MCF 10A (cell line): ENCODE measurements at regions of chr16 and their contacts with region 1.

Region 1: DNA sequence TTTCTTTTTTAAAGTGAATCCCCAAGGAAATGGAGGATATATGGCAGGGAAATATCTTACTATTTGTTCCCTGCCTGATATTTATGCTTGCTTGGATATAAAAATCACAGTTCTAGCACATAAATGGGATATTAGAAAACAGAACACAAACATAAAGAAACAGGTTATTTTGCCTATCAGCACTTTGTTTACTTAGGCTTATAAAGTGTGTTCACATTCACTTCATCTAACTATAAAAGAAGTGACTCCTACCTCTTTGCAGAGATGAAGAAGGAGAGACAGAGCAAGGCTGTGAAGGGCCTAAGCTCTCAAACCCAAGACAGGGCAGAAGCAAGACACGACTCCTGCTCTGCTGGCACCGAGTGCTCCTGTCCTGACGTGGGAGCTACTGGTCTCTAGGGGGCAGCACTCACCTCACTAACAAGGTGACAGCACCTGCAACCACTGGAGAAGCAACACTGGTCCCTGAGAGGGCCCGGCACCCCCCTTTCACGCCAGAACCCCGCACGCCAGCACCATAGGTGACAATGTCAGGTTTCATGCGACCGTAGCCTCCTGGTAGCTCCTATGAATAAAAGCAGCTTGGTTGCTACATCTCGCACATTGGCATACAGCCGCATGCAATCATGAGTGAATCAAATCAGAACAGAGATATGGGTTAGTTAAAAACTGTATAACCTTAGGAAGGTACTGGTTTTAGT is 32.0 kb downstream of the MBTPS1 start:
- DNase-seq: peak; percentile 77
- H3K4me3 Mint-ChIP-seq: no peak overlapping the region
- H3K27ac Mint-ChIP-seq: no peak overlapping the region
- H3K4me1 Mint-ChIP-seq: no peaks in the 10 kb centered on the region
- H3K27me3 Mint-ChIP-seq: no peaks in the 10 kb centered on the region
- CTCF ChIP-seq: peak; percentile 75

Region 2: DNA sequence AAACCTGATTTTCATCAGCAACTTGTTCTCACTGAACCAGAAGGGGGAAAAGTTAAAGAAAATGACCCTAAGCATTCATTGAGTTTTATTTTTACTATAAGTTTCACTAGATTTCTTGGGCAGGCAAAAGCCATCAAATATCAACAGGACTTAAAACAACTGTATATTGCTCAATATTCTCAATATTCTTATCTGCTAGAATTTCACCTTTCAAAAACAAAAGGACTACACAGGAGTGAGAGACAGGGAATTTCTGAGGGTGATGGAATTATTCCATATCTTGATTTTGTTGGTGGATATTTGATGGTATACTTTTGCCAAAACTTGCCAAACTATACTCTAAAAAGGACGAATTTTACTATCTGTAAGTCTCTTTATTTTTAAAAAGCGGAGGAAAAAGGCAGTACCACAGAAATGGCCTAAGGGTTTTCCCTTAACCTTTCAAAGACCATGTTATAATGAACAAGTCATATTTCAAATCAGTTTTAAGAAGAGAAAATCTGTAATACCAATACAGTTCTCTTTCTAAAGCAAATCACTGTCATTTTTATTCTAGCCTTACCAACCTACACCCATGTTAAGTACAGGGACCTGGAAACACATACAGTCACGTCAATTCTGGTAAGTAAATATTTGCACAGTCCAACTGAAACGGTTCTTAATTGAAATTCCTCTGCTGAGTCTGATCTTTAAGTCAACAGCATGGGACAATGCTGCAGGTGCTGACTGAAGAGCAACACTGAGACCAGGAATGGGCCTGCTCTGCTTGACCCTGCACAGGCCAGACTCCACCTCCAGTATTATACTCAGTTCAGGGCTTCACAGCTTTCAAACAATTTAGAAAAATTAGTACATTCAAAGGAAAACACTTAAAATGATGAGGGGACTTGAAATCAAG is 11.6 kb after region 1 on chr16:
- CTCF ChIA-PET with region 1: interaction called, 12 read pairs
- POLR2A ChIA-PET with region 1: no interaction called
- intact Hi-C with region 1: no loop called
- DNase-seq: no peak
- H3K4me3 Mint-ChIP-seq: no peak overlapping the region
- H3K27ac Mint-ChIP-seq: no peak overlapping the region
- H3K4me1 Mint-ChIP-seq: no peaks in the 10 kb centered on the region
- H3K27me3 Mint-ChIP-seq: no peaks in the 10 kb centered on the region
- CTCF ChIP-seq: no peak

Region 3: DNA sequence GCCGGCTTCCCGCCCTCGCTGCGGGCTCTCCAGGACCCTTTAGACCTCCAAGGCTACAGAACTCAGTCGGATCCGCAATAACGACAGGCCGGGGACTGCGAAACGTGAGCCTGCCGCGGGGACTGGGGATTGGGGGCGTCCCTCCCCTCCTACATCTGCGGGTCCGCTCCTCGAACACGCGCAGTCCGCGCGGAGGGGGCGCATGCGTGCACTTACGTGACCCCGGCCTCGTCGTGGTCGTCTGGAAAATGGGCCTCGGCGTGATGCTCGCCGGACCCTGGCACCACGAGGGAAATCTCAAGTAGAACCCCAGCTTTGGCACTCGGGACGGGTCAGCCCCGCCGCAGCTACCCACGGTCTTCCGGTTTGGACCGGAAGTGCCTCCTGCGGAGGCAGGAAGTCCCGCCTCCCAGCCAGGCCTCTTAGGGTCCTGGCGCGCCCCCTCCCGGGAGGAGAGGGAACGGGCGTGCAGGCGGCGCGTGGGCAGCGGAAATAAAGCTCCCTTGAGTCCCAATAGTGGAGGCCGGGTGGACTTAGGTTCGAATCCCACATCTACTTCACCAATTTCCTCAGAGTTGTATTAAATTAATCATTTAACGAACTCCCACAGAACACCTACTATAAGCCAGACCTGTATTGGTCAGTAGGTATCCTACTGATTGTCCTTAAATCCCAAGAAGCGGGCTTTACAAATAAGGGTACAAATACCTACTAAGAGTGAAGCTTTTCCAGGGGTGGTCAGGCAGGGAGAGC is 102.1 kb after region 1 on chr16 and contains the start of gene TAF1C:
- CTCF ChIA-PET with region 1: interaction called, 20 read pairs
- POLR2A ChIA-PET with region 1: interaction called, 4 read pairs
- intact Hi-C with region 1: loop called (anchors 1 kb)
- DNase-seq: peak; percentile 92
- H3K4me3 Mint-ChIP-seq: peak within 1 kb of the TSS; percentile 87
- H3K27ac Mint-ChIP-seq: peak within 1 kb of the TSS; percentile 69
- H3K4me1 Mint-ChIP-seq: peaks cover 14% of the 10 kb centered on the region
- H3K27me3 Mint-ChIP-seq: no peaks in the 10 kb centered on the region
- CTCF ChIP-seq: peak; percentile 89
- total RNA-seq, gene TAF1C: 29.3 and 35.1 TPM in 2 replicates